Breast epithelium (tissue), 4 donors: ENCODE measurements at regions of chr13 and their contacts with region 1.

Region 1: DNA sequence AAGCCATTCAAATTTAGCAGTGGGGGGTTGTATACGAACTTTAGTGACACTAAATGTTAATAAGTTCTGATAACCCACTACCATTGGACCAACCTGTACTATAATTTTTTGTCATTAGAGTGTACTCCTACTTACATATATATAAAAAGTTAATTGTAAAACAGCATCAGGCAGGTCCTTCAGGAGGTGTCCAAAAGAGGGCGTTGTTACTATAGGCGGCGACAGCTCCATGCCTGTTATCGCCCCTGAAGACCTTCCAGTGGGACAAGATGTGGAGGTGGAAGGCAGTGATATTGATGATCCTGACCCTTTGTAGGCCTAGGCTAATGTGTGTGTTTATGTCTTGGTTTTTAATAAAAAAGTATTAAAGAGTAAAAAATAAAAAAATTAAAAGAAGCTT is 27.5 kb downstream of the SPRYD7 start:
- DNase-seq: no peak
- H3K4me3 ChIP-seq: no peak overlapping the region
- H3K27ac ChIP-seq: no peak overlapping the region
- H3K4me1 ChIP-seq: no peaks in the 10 kb centered on the region
- H3K27me3 ChIP-seq: no peaks in the 10 kb centered on the region
- CTCF ChIP-seq: no peak
- POLR2A ChIP-seq: no peak

Region 2: DNA sequence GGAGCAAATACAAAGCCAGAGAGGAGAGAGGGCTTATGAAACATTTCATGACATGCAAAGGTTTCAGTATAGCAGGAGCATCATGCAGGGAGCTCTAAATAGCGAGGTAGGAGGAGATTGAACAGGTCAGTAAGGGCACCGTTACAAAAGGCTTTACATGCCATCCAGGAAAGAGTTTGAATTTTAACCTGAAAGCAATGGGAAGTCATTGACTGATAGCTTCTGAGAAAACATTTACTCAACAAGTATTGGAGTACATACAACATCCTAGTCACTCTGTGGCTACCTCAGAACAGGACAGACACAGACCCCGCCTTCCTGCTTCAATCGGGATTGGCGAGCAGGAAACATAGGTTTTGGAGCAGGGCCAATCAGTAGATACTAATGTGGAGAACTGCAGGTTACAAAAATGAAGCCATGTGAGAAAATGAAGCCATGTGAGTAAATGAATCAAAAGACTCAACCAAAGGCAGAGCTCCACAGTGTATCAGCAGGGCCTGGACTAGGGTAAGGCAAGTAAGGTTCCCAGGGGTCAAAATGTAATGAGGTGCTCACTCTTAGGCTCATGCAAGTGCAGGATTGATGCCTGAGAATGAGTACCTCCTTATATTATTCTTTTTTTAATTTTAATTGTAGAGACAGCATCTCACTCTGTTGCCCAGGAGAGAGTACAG is 979.7 kb before region 1 on chr13:
- intact Hi-C with region 1: loop called (anchors 5 kb)
- DNase-seq: no peak
- H3K4me3 ChIP-seq: no peak overlapping the region
- H3K27ac ChIP-seq: no peak overlapping the region
- H3K4me1 ChIP-seq: no peaks in the 10 kb centered on the region
- H3K27me3 ChIP-seq: no peaks in the 10 kb centered on the region
- CTCF ChIP-seq: no peak
- POLR2A ChIP-seq: no peak

Region 3: GRCh38 chr13:51645154-51645650 is 1736.6 kb after region 1 on chr13:
- intact Hi-C with region 1: no loop called
- DNase-seq: no peak
- H3K4me3 ChIP-seq: no peak overlapping the region
- H3K27ac ChIP-seq: peak overlapping the region; percentile 34 to 48
- H3K4me1 ChIP-seq: peaks cover 3 to 7% of the 10 kb centered on the region in 2 donors
- H3K27me3 ChIP-seq: no peaks in the 10 kb centered on the region
- CTCF ChIP-seq: no peak
- POLR2A ChIP-seq: no peak